BJ (cell line): ENCODE measurements at regions of chr17 and their contacts with region 1.

Region 1: GRCh38 chr17:43766413-43767052 is 7.9 kb upstream of the SOST start:
- DNase-seq: no peak
- H3K4me3 ChIP-seq: no peak overlapping the region
- H3K27me3 ChIP-seq: no peaks in the 10 kb centered on the region
- CTCF ChIP-seq: peak; percentile 86

Region 2: DNA sequence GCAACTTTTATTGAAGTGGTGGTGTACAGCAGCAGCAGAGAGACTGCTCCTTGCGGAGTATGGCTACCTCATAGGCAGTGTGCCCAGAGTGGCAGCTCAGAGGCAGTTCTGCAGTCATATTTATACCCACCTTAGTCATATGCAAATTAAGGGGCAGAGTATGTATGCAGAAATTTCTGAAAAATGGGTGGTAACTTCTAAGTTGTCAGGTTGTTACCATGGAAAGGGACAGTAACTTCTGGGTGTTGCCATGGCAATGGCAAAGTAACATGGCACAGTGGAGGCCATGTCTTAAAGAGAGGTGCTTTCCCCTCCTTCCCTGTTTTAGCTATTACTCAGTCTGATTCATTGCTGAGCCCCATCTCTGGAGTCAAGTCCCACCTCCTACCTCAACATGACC is 158.2 kb before region 1 on chr17:
- CTCF ChIA-PET with region 1: no interaction called
- POLR2A ChIA-PET with region 1: no interaction called
- DNase-seq: no peak
- H3K4me3 ChIP-seq: no peak overlapping the region
- H3K27me3 ChIP-seq: peaks cover 3% of the 10 kb centered on the region; the same call in 1 of the 2 replicates
- CTCF ChIP-seq: no peak

Region 3: GRCh38 chr17:43720311-43721060 is 46.0 kb before region 1 on chr17:
- CTCF ChIA-PET with region 1: no interaction called
- POLR2A ChIA-PET with region 1: no interaction called
- DNase-seq: no peak
- H3K4me3 ChIP-seq: peak overlapping the region; percentile 57
- H3K27me3 ChIP-seq: no peaks in the 10 kb centered on the region
- CTCF ChIP-seq: no peak

Region 4: DNA sequence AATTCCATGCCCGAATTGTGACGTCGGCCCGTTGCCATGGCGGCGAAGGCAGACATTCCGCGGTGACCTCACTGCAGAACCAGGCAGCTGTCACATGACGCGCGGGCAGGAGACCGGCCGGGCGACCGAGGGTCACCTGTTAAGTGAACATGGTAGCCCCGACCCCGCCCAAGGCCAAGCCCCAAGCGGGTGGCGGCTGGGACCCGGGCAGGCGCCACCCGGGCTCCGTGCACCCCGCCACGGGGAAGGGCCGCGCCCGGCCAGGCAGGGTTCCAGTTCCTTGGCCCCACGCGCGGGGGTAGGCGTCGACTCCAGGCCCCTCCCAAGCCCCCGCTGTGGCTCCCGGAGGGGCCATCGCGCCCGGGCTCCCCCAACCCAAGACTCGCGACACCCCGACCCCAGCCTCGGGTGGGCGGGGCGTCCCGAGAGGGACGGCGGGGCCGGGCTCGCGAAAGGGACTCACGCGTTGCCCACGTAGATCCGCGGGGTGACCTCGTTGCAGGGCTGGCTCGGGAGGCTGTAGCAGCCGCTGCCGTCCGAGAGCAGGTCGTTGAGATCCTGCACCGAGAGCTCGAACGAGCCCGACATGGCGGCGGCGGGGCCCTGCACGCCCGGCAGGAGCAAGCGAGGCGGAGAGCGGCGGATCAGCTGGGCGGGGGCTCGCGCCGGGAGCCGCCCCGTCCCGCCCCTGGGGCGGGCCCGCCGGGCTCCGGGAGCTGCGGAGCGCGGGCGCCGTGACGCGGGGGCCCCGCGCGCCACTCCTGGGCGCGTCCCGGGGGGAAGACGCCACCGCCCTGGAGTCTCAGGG is 12.0 kb after region 1 on chr17 and contains the start of gene DUSP3:
- CTCF ChIA-PET with region 1: interaction called, 16 read pairs
- POLR2A ChIA-PET with region 1: no interaction called
- DNase-seq: peak; percentile 64
- H3K4me3 ChIP-seq: peak within 1 kb of the TSS; percentile 96
- H3K27me3 ChIP-seq: peaks cover 12% of the 10 kb centered on the region
- CTCF ChIP-seq: no peak
- polyA plus RNA-seq, gene DUSP3: 27.6 and 27.9 TPM in 2 replicates

Region 5: DNA sequence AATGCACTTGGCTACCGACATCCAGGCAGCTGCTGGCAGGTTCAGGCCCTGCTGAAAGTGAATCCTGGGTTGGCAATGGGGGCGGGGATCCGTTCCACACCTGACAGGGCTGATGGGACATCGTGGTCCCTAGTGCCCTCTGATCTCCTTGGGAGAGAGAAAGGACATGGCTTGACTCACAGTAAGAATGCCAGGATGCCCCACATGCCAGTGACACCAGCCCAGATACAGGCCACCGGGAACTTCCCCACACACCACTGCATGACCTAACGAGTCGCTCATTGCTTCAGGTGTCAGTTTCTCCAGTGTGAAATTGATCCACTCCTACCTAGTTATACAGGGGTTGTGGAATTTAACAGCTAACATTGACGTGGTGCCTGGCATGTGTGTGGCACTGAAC is 87.9 kb after region 1 on chr17:
- CTCF ChIA-PET with region 1: no interaction called
- POLR2A ChIA-PET with region 1: no interaction called
- DNase-seq: no peak
- H3K4me3 ChIP-seq: no peak overlapping the region
- H3K27me3 ChIP-seq: peaks cover 41% of the 10 kb centered on the region
- CTCF ChIP-seq: no peak